ENCODE measurements at regions of chr9 and their contacts with region 1.

Region 1: GRCh38 chr9:120531683-120532300 is 48.2 kb downstream of the CDK5RAP2 start:
- DNase-seq: peak; percentile 32
- ATAC-seq: peak; percentile 77
- H3K4me3 ChIP-seq: no peak overlapping the region
- H3K27ac ChIP-seq: no peak overlapping the region
- H3K4me1 ChIP-seq: no peaks in the 10 kb centered on the region
- H3K27me3 ChIP-seq: no peaks in the 10 kb centered on the region
- CTCF ChIP-seq: peak; percentile 55
- POLR2A ChIP-seq: no peak
- RAD21 ChIP-seq: peak; percentile 61

Region 2: GRCh38 chr9:119556129-119556875 is 975.5 kb before region 1 on chr9:
- CTCF ChIA-PET with region 1: interaction called, 3 read pairs
- POLR2A ChIA-PET with region 1: no interaction called
- dilution Hi-C with region 1: no loop called
- in situ Hi-C with region 1: no loop called
- intact Hi-C with region 1: loop called (anchors 1 kb)
- DNase-seq: peak; percentile 18
- ATAC-seq: peak; percentile 93
- H3K4me3 ChIP-seq: peak overlapping the region; percentile 40
- H3K27ac ChIP-seq: no peak overlapping the region
- H3K4me1 ChIP-seq: no peaks in the 10 kb centered on the region
- H3K27me3 ChIP-seq: no peaks in the 10 kb centered on the region
- CTCF ChIP-seq: peak; percentile 86
- POLR2A ChIP-seq: no peak
- RAD21 ChIP-seq: peak; percentile 77

Region 3: GRCh38 chr9:119961774-119962424 is 569.9 kb before region 1 on chr9:
- CTCF ChIA-PET with region 1: no interaction called
- POLR2A ChIA-PET with region 1: no interaction called
- dilution Hi-C with region 1: no loop called
- in situ Hi-C with region 1: no loop called
- intact Hi-C with region 1: loop called (anchors 5 kb)
- DNase-seq: peak; percentile 29
- ATAC-seq: 0 out of 2 replicates have a peak, but pooled peaks have one; percentile 21
- H3K4me3 ChIP-seq: no peak overlapping the region
- H3K27ac ChIP-seq: no peak overlapping the region
- H3K4me1 ChIP-seq: peaks cover 5% of the 10 kb centered on the region
- H3K27me3 ChIP-seq: no peaks in the 10 kb centered on the region
- CTCF ChIP-seq: peak; percentile 60
- POLR2A ChIP-seq: no peak
- RAD21 ChIP-seq: peak; percentile 53

Region 4: GRCh38 chr9:120562861-120563443 is 31.2 kb after region 1 on chr9:
- CTCF ChIA-PET with region 1: no interaction called
- POLR2A ChIA-PET with region 1: no interaction called
- dilution Hi-C with region 1: no loop called
- in situ Hi-C with region 1: no loop called
- intact Hi-C with region 1: no loop called
- DNase-seq: no peak
- ATAC-seq: no peak
- H3K4me3 ChIP-seq: no peak overlapping the region
- H3K27ac ChIP-seq: no peak overlapping the region
- H3K4me1 ChIP-seq: no peaks in the 10 kb centered on the region
- H3K27me3 ChIP-seq: no peaks in the 10 kb centered on the region
- CTCF ChIP-seq: no peak
- POLR2A ChIP-seq: no peak
- RAD21 ChIP-seq: no peak

Measured in IMR-90 (cell line).